ENCODE measurements at regions of chr4 and their contacts with region 1.

Region 1: GRCh38 chr4:145956288-145956890 is 17.8 kb upstream of the ZNF827 start:
- DNase-seq: peak; percentile 24 to 50 (median 33)
- H3K4me3 ChIP-seq: no peak overlapping the region
- H3K4me3 Mint-ChIP-seq: no peak overlapping the region
- H3K27ac ChIP-seq: no peak overlapping the region
- H3K27ac Mint-ChIP-seq: peak overlapping the region in 1 of 7 donors; percentile 57
- H3K4me1 ChIP-seq: no peaks in the 10 kb centered on the region
- H3K4me1 Mint-ChIP-seq: no peaks in the 10 kb centered on the region
- H3K27me3 ChIP-seq: no peaks in the 10 kb centered on the region
- H3K27me3 Mint-ChIP-seq: peaks cover 6 to 8% of the 10 kb centered on the region in 2 donors

Region 2: GRCh38 chr4:145945431-145946155 is 10.8 kb before region 1 on chr4:
- CTCF ChIA-PET with region 1: interaction called, 18 read pairs
- POLR2A ChIA-PET with region 1: no interaction called
- intact Hi-C with region 1: no loop called
- DNase-seq: no peak
- H3K4me3 ChIP-seq: no peak overlapping the region
- H3K4me3 Mint-ChIP-seq: no peak overlapping the region
- H3K27ac ChIP-seq: no peak overlapping the region
- H3K27ac Mint-ChIP-seq: no peak overlapping the region
- H3K4me1 ChIP-seq: no peaks in the 10 kb centered on the region
- H3K4me1 Mint-ChIP-seq: no peaks in the 10 kb centered on the region
- H3K27me3 ChIP-seq: no peaks in the 10 kb centered on the region
- H3K27me3 Mint-ChIP-seq: peaks cover 7 to 18% of the 10 kb centered on the region in 2 donors

Region 3: DNA sequence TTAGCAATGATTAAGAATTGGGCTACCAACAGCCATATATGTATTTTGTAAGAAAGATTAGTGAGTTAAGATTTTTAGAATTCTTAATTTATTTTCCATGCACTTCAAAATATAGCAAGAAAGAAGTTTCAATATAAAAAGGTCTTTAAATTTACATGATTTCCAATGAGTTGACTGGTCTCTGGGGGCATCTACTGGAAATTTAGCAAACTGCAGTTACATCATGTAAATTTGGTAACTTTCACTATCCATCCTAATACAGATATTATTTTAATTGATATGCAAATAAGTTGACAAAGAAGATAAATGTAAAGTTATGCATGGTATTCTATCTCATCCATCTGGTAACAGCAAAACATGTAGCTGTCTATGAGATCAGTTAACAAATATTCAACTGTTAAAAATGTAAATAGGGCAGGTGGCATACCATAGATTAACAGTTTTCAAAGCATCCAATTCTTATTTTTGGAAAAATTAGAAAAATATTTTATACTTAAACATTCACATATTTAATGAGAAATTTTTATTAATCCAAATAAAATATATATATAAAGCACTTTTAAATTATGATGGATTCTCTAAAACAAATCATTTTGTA is 960.2 kb after region 1 on chr4:
- CTCF ChIA-PET with region 1: no interaction called
- POLR2A ChIA-PET with region 1: no interaction called
- intact Hi-C with region 1: loop called (anchors 10 kb)
- DNase-seq: peak in 4 of 5 donors; percentile 20 to 23 (median 21)
- H3K4me3 ChIP-seq: no peak overlapping the region
- H3K4me3 Mint-ChIP-seq: no peak overlapping the region
- H3K27ac ChIP-seq: no peak overlapping the region
- H3K27ac Mint-ChIP-seq: no peak overlapping the region
- H3K4me1 ChIP-seq: no peaks in the 10 kb centered on the region
- H3K4me1 Mint-ChIP-seq: no peaks in the 10 kb centered on the region
- H3K27me3 ChIP-seq: no peaks in the 10 kb centered on the region
- H3K27me3 Mint-ChIP-seq: peaks cover 3 to 4% of the 10 kb centered on the region in 2 donors